MCF 10A (cell line): ENCODE measurements at regions of chr22 and their contacts with region 1.

Region 1: GRCh38 chr22:29635734-29636357 is 32.4 kb downstream of the NF2 start:
- DNase-seq: peak; percentile 56
- H3K4me3 Mint-ChIP-seq: no peak overlapping the region
- H3K27ac Mint-ChIP-seq: no peak overlapping the region
- H3K4me1 Mint-ChIP-seq: peaks cover 12% of the 10 kb centered on the region
- H3K27me3 Mint-ChIP-seq: no peaks in the 10 kb centered on the region
- CTCF ChIP-seq: peak; percentile 57

Region 2: GRCh38 chr22:29587938-29588699 is 47.7 kb before region 1 on chr22:
- CTCF ChIA-PET with region 1: interaction called, 10 read pairs
- POLR2A ChIA-PET with region 1: no interaction called
- intact Hi-C with region 1: no loop called
- DNase-seq: peak; percentile 92
- H3K4me3 Mint-ChIP-seq: no peak overlapping the region
- H3K27ac Mint-ChIP-seq: no peak overlapping the region
- H3K4me1 Mint-ChIP-seq: no peaks in the 10 kb centered on the region
- H3K27me3 Mint-ChIP-seq: no peaks in the 10 kb centered on the region
- CTCF ChIP-seq: no peak

Region 3: GRCh38 chr22:29654356-29654755 is 18.5 kb after region 1 on chr22:
- CTCF ChIA-PET with region 1: interaction called, 13 read pairs
- POLR2A ChIA-PET with region 1: no interaction called
- intact Hi-C with region 1: no loop called
- DNase-seq: no peak
- H3K4me3 Mint-ChIP-seq: no peak overlapping the region
- H3K27ac Mint-ChIP-seq: no peak overlapping the region
- H3K4me1 Mint-ChIP-seq: no peaks in the 10 kb centered on the region
- H3K27me3 Mint-ChIP-seq: no peaks in the 10 kb centered on the region
- CTCF ChIP-seq: no peak